ENCODE measurements at regions of chr16 and their contacts with region 1.

Region 1: DNA sequence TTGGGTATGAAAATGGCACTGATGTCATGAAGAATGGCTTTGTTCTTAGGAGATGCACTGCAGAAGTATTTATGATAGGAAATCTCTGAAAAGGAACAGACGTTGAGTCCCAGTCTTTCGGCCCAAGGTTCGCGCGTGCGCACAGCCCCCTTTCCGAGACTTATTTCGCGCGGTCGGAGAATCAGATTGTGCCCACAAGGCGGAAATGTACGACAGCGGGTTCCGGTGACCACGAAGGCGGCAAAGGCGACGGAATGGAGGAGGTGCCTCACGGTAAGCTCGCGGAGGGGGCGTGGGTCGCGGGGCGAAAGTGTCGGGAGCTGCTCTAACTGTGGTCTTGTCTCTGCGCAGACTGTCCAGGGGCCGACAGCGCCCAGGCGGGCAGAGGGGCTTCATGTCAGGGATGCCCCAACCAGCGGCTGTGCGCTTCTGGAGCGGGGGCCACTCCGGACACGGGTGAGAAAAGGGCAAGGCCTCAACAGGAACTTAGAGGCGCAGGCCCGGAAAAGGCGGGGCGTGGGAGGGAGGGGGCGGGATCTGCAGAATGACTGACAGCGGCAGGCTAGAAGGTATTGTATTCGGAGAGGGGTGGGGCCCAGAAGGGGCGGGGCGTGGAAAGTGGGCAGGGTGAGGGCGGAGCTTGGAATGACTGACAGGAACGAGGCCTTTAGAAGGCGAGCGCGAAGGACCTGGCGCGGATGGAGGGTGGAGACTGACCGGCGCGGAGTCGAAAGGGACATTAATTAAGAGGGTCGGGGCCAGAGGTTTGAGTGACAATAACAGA is at the start of gene NUBP1:
- DNase-seq: peak; percentile 98

Region 2: DNA sequence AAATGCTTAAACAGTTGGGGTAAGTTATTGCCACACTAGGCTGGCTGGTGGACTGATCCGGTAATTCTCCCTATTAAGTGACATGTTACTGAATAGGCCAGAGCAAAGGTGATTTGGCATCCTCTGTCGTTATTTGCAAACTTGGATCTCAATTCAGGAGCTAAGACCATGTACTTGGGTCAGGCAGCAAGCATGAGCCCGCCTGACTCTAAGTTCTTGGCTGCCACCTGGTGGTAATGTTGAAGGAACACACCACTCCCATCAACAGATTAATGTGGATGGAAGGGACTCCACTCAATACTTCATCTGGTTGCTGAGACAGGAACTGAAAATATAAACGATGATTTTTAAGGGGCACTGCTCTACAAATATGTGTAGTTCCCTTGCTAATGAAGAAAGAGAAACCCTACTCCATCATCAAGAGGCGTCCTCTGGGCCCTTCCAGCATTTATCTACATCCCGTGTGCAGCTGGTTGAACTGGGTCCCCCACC is 234.2 kb before region 1 on chr16:
- in situ Hi-C with region 1: loop called (anchors 25 kb)
- DNase-seq: peak; percentile 83

Region 3: DNA sequence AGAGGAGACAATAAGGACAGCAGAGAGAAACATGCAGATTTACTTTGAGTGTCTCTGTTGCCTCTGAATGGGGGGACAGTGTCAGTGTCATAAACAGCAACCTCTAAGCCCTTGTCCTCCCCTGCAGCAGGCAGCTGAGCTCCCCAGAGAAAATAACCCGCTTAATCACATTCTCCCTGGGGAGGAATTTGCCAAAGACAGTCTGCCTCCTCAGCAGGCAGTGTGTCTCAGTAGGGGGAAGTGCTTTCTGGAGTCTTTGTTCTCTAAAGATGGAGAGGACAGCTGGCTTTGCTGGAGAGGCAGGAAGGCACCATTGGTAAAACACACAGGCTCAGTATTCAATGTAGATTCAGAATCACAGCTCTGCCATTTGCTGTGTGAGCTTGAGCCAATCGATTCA is 65.1 kb before region 1 on chr16:
- in situ Hi-C with region 1: no loop called
- DNase-seq: no peak

Region 4: GRCh38 chr16:10862432-10862831 is 118.6 kb after region 1 on chr16:
- in situ Hi-C with region 1: no loop called
- DNase-seq: peak; percentile 85

Region 5: DNA sequence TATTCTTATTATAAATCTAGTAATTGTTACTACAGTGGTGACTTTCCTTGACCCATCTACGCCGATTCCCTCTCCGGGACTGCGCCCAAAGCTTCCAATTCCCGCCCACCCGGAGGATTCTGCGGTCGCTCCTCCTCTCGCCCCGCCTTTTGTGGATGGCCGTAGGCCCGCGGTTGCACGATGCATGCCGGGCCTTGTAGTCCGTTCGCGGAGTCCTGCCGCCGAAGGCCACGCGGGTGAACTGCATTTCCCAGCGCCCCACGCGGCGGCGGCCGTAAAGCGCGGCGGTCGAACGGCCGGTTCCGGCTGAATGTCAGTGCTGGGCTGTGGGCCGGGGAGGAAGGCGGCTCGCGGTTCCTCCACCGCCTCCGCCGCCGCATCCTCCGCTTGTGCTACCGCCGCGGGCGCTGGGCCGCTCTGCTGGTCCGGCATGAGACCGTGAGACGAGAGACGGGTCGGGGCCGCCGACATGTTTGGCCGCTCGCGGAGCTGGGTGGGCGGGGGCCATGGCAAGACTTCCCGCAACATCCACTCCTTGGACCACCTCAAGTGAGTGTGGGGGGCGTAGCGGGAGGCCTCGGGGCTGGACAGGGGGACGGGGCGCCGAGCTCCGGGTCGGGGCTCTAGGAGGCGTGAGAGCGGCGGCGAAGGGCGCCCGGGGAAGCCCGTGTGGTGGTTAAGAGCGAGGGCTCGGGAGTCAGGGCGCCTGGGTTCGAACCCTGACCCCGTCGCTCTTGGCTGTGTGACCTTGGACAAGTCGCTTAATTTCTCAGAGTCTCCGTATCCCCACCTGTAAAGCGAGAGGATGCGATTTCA is 200.7 kb after region 1 on chr16 and contains the start of gene CLEC16A:
- in situ Hi-C with region 1: loop called (anchors 25 kb)
- DNase-seq: peak; percentile 99

Measured in ACHN (cell line).